Mucosa of descending colon (tissue), 3 donors: ENCODE measurements at regions of chr4 and their contacts with region 1.

Region 1: GRCh38 chr4:8468746-8469535 is 28.4 kb downstream of the TRMT44 start:
- DNase-seq: peak in 2 of 3 donors; percentile 65 to 73
- ATAC-seq: peak; percentile 81
- H3K4me3 ChIP-seq: no peak overlapping the region
- H3K4me1 ChIP-seq: peaks cover 5% of the 10 kb centered on the region
- CTCF ChIP-seq: peak; percentile 72

Region 2: GRCh38 chr4:8594097-8595038 is 125.4 kb after region 1 on chr4:
- intact Hi-C with region 1: loop called (anchors 5 kb)
- DNase-seq: peak in 2 of 3 donors; percentile 37 to 81
- ATAC-seq: peak; percentile 64
- H3K4me3 ChIP-seq: no peak overlapping the region
- H3K4me1 ChIP-seq: no peaks in the 10 kb centered on the region
- CTCF ChIP-seq: peak; percentile 24